ENCODE measurements at regions of chr9 and their contacts with region 1.

Region 1: DNA sequence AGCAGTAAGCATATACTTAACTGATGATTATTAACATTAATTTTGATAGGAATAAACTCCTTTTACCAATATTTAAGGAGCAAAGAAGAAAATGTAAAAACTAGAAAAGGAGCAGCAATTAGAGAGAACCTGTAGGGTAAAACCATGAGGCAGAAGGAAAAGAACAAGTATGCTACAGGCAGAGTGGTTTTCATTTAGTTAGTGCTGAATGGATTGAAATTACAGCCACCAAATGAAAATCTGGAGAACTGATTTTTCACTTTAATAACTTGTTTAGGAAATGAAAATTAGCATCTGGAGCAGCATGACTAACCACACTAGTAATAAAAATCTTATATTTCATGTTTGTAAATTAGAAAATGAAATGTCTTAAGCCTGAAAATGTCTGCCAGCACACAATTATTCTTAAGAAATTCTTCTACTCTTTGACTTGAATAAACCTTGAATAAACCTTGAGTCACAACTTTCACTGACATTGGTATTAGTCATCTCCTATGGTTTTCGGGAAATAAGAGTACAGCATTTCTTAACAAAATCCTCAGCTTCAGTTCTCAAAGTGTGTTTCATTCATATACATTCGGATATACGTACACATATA is 1504.9 kb upstream of the C9orf72 start:
- DNase-seq: peak; percentile 82
- H3K4me3 ChIP-seq: peak overlapping the region in 2 of 3 experiments; percentile 13 to 29
- H3K27ac ChIP-seq: peak overlapping the region; percentile 68
- H3K4me1 ChIP-seq: peaks cover 12% of the 10 kb centered on the region
- H3K27me3 ChIP-seq: no peaks in the 10 kb centered on the region
- CTCF ChIP-seq: no peak

Region 2: GRCh38 chr9:28808042-28808441 is 270.1 kb before region 1 on chr9:
- CTCF ChIA-PET with region 1: no interaction called
- dilution Hi-C with region 1: no loop called
- in situ Hi-C with region 1: no loop called
- intact Hi-C with region 1: loop called (anchors 10 kb)
- DNase-seq: peak; percentile 76
- H3K4me3 ChIP-seq: no peak overlapping the region
- H3K27ac ChIP-seq: peak overlapping the region; percentile 26
- H3K4me1 ChIP-seq: peaks cover 30% of the 10 kb centered on the region
- H3K27me3 ChIP-seq: no peaks in the 10 kb centered on the region
- CTCF ChIP-seq: no peak

Region 3: DNA sequence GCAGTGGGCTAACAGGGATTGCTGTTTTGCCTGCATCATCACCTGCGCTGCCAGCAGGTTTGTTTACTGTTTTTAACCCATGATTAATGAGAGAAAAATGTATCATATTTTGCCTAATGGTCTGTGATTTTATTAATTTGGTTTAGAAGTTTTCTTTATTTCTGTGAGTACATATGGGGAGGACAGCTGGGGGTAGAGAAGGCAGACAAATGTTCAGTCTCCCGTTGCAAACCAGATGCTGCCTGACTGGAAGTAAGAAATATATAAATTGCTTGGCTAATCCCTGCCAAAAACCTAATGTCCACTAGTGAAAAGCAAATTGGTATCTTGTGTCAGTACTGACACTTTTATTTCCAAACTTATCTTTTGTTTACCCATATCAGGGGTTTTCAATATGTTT is 261.2 kb after region 1 on chr9:
- CTCF ChIA-PET with region 1: no interaction called
- dilution Hi-C with region 1: no loop called
- in situ Hi-C with region 1: no loop called
- intact Hi-C with region 1: no loop called
- DNase-seq: no peak
- H3K4me3 ChIP-seq: no peak overlapping the region
- H3K27ac ChIP-seq: no peak overlapping the region
- H3K4me1 ChIP-seq: no peaks in the 10 kb centered on the region
- H3K27me3 ChIP-seq: no peaks in the 10 kb centered on the region
- CTCF ChIP-seq: no peak